HEK293T (cell line): ENCODE measurements at regions of chrX and their contacts with region 1.

Region 1: DNA sequence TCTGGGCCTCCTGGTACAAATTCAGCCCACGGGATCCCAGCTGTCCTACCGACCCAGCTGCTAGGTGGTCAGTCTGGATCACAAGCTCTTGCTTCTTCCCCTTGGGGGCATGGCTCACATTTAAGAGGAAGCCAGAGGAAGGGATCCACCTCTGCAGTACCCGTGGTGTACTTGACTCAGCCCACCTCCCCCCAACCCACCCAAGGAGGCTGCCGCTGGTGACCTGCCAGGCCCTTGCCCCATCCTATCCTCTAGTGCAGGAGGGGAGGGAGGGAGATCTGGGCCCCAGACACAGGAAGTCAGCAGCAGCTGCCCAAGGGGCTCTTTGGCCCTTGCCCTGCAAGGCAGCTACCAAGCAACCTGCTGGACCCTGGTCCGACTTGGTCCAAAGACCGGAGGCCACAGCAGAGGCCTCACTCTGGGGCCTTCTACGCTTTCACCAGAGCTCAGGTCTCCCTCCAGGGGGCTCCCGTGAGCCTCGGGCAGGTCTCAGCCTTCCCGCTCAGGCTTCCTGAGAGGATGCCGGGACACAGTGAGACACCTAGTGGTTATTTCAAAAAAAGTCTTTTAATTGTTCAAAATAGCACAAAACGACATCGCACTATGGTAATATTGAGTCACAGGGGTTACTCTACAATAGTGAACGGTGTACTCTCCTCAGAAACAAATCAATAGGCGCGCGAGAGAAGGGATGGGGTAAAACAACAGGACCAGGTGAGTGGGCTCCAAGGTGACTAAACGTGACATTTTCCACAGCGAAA is 2.7 kb upstream of the RENBP start:
- DNase-seq: peak; percentile 88

Region 2: GRCh38 chrX:153763989-153764755 is 183.0 kb before region 1 on chrX and contains the start of gene PLXNB3:
- CTCF ChIA-PET with region 1: interaction called, 15 read pairs
- POLR2A ChIA-PET with region 1: interaction called, 3 read pairs
- DNase-seq: peak; percentile 80

Region 3: DNA sequence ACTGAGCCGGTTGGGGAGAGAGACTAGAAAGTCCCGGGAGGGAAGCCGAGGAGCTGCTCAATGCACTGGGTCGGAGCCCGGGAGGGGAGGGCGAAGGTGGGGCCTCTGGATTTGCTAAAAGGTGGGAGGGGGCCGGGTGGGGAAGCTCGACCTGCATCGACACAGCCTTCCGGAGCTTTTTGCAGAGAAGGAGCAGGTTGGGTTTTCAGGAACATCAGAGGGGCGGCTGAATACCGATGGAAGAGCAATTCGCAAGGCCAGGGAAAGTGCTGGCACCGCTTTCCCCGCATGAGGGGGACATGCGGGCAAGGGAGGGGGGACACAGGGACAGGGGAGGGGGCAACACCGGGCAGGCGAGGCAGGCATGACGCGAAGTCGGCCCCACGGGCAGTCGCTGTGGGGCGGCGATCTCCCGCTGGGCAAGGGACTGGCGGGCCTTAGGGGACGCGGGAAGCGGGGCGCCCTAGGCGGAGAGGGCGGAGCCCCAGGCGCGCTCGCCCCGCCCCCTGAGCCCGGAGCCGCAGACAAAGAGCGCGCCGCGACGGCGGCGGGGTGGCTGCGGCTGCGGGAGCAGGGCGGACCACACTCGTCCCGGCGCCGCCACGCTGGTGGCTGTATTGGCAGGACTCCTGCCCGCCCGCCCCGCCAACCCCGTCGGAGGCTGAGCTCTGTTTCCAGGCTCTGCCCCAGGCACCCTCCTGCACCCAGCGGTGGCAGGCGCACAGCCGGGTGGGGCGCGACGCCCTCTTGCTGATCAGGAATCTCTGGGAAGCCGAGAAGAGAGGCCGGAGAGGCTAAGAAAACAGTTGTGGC is 128.4 kb before region 1 on chrX:
- CTCF ChIA-PET with region 1: interaction called, 10 read pairs
- POLR2A ChIA-PET with region 1: no interaction called
- DNase-seq: peak; percentile 82

Region 4: GRCh38 chrX:153971450-153972367 is 24.5 kb after region 1 on chrX and contains the start of gene HCFC1:
- CTCF ChIA-PET with region 1: interaction called, 36 read pairs
- POLR2A ChIA-PET with region 1: interaction called, 6 read pairs
- DNase-seq: peak; percentile 83

Region 5: DNA sequence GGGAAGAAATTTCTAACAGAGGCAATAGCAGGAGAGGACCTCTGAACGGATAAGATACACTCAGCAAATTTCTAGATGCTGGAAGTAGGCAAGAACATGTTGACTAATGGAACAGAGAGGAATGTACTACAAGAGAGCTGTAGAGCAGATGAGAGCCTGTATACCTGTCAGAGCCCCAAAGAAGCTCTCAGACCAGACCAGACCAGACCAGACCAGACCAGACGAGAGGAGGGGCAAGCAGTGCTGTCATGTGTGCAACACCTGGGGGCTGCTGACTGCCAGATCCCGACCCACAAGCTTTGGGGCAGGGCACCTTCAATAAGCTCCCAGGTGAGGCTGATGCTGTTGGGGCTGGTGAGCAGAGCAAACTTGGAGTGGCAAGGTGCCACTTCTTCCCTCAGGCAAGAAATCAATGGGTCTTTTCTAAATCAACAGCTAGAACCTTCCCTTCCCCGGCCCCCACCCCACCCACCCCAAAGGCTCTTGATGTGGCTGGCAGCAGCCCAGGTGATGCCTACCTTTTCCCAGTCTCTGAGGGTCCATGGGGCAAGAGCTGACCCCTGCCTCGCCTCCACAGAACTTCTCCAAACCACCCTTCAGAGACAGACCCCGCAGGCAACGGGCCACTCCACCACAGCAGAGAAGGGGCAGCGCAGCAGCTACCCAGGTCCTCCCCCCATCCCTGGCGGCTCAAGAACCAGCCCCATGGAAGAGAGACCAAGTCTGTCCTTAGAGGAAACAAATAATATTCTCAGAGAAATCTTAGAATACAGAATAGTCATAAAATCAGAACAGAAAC is 117.6 kb after region 1 on chrX:
- CTCF ChIA-PET with region 1: no interaction called
- POLR2A ChIA-PET with region 1: no interaction called
- DNase-seq: no peak